MCF 10A (cell line): ENCODE measurements at regions of chr6 and their contacts with region 1.

Region 1: DNA sequence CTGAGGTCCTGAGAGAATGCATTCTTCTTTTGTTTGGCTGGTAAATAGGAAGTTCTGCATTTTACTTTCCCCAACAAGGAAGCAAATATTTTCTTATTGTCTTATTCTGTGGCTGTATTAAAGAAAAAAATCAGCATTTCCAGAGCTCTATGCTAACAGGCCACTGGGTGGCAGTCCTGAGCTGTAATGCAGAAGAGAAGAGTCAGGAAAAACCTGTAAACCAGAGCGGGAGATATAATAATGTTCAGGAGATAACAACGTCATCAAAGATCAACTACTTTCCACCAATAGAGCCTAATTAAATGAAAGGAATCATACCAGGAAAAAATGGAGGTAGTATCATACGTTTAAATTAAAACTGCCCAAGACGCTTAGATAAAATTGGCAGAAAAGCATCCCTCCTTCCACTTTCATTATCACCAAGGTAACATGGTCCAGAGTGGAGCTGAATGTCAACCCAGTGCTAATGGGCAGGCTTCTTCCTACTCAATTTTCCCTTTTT is 55.6 kb upstream of the CARMIL1 start:
- DNase-seq: peak; percentile 81
- H3K4me3 Mint-ChIP-seq: peak overlapping the region; percentile 13
- H3K27ac Mint-ChIP-seq: no peak overlapping the region
- H3K4me1 Mint-ChIP-seq: peaks cover 32% of the 10 kb centered on the region
- H3K27me3 Mint-ChIP-seq: no peaks in the 10 kb centered on the region
- CTCF ChIP-seq: peak; percentile 87

Region 2: DNA sequence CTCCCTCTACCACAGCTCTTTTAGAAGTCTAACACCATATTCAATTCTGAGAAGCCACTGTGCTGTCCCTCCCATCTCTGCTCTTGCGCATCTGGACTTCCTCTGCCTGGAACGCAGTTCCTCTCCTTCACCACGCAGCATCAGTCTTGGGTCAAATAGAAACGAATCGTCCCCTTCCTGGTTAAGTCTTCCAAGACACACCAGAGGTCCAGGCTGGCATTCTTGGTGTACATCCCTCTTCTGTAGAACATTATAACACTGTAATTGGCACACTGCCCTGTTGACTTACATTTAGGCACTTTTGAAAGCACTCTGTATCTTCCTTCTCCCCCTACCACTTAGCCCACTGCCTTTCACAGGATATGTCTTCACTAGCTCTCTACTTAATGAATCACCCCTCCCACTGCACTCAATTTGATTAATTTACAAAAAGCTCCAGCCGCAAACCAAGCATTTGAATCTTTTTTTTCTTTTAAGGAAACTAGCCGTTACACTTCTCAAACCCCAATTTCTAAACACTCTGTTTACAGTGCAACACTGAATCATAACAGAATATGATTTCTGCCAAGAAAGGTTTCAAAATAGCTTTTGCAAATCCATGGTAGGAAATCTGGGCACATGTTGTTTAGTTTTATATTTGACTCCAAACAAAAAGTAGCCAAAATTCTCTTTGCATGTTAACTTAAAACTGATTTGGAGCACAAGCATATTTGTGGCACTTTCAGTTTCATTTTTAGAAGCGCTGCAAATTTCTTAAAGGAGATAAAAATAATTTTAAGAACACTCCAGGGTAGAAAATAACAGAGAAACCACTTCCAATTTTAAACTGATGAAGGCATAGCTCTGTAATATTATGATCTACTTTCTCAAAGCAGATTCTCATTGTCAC is 85.1 kb before region 1 on chr6:
- CTCF ChIA-PET with region 1: interaction called, 4 read pairs
- POLR2A ChIA-PET with region 1: interaction called, 16 read pairs
- intact Hi-C with region 1: loop called (anchors 1 kb)
- DNase-seq: peak; percentile 84
- H3K4me3 Mint-ChIP-seq: peak overlapping the region; percentile 79
- H3K27ac Mint-ChIP-seq: peak overlapping the region; percentile 92
- H3K4me1 Mint-ChIP-seq: peaks cover 26% of the 10 kb centered on the region
- H3K27me3 Mint-ChIP-seq: no peaks in the 10 kb centered on the region
- CTCF ChIP-seq: peak; percentile 17

Region 3: DNA sequence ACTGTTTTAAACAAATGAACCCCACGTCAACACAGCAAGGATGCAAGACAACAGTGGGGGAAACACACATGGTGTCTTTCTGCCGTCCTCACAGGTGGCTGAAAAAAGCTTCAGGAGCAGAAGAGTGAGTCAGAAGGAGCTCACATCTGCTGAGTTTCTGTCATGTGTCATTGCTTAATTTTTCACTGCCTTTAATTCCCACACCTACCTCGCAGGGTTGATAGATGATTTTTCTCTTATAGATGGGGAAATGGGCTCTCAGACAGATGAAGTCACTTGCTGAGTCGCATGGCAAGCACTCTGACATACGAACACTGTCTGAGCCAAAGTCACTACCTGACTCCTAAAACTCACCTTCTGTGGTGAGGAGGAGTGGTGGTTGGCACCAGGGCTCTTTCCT is 27.3 kb after region 1 on chr6:
- CTCF ChIA-PET with region 1: interaction called, 14 read pairs
- POLR2A ChIA-PET with region 1: interaction called, 4 read pairs
- intact Hi-C with region 1: no loop called
- DNase-seq: peak; percentile 81
- H3K4me3 Mint-ChIP-seq: no peak overlapping the region
- H3K27ac Mint-ChIP-seq: no peak overlapping the region
- H3K4me1 Mint-ChIP-seq: peaks cover 25% of the 10 kb centered on the region
- H3K27me3 Mint-ChIP-seq: no peaks in the 10 kb centered on the region
- CTCF ChIP-seq: no peak

Region 4: GRCh38 chr6:25342802-25343201 is 119.3 kb after region 1 on chr6:
- CTCF ChIA-PET with region 1: no interaction called
- POLR2A ChIA-PET with region 1: no interaction called
- intact Hi-C with region 1: no loop called
- DNase-seq: no peak
- H3K4me3 Mint-ChIP-seq: no peak overlapping the region
- H3K27ac Mint-ChIP-seq: no peak overlapping the region
- H3K4me1 Mint-ChIP-seq: peaks cover 11% of the 10 kb centered on the region
- H3K27me3 Mint-ChIP-seq: no peaks in the 10 kb centered on the region
- CTCF ChIP-seq: no peak

Region 5: GRCh38 chr6:25490018-25490801 is 266.7 kb after region 1 on chr6:
- CTCF ChIA-PET with region 1: interaction called, 26 read pairs
- POLR2A ChIA-PET with region 1: interaction called, 5 read pairs
- intact Hi-C with region 1: loop called (anchors 1 kb)
- DNase-seq: peak; percentile 88
- H3K4me3 Mint-ChIP-seq: no peak overlapping the region
- H3K27ac Mint-ChIP-seq: peak overlapping the region; percentile 86
- H3K4me1 Mint-ChIP-seq: peaks cover 8% of the 10 kb centered on the region
- H3K27me3 Mint-ChIP-seq: no peaks in the 10 kb centered on the region
- CTCF ChIP-seq: peak; percentile 70

Region 6: DNA sequence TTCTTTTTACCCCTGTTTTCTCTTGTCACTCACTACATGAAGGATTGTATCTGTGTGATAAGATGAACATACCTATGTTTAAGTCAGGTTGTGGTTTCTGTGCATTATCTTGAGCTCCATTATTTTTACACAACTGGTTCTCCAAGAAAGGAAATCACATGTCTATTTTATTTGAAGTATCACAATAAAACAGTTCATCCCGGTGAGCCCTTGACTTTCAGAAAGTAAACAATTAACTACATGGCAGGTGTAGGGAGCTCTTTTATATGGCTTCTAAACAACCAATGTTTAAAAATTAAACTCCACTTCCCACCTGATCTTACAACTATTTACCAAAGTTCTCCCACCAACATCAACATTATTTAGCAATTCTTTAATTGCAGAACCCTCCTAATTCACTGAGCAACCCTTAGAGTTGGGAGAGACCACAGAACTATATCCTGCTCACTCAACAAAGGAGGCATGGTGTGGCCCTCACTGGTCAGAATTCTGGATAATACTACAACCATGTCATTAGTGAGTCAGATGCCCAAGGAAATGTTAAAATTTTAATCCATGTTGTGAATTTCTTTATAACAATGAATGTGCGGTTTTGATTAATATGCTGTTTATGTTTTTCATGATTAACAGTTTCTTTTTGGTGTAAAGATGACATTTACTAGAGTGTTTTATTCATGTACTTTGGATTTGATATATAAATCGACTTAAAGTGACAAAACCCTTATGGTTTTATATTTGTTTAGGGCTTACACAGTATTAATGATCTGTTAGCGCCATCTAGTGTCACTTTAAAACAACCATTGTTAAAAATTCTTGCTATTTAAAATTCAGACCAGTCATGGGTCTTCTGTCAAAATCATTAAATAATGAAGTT is 378.5 kb after region 1 on chr6:
- CTCF ChIA-PET with region 1: interaction called, 5 read pairs
- POLR2A ChIA-PET with region 1: no interaction called
- intact Hi-C with region 1: loop called (anchors 1 kb)
- DNase-seq: peak; percentile 58
- H3K4me3 Mint-ChIP-seq: no peak overlapping the region
- H3K27ac Mint-ChIP-seq: no peak overlapping the region
- H3K4me1 Mint-ChIP-seq: no peaks in the 10 kb centered on the region
- H3K27me3 Mint-ChIP-seq: no peaks in the 10 kb centered on the region
- CTCF ChIP-seq: peak; percentile 47